ENCODE measurements at regions of chr5 and their contacts with region 1.

Region 1: DNA sequence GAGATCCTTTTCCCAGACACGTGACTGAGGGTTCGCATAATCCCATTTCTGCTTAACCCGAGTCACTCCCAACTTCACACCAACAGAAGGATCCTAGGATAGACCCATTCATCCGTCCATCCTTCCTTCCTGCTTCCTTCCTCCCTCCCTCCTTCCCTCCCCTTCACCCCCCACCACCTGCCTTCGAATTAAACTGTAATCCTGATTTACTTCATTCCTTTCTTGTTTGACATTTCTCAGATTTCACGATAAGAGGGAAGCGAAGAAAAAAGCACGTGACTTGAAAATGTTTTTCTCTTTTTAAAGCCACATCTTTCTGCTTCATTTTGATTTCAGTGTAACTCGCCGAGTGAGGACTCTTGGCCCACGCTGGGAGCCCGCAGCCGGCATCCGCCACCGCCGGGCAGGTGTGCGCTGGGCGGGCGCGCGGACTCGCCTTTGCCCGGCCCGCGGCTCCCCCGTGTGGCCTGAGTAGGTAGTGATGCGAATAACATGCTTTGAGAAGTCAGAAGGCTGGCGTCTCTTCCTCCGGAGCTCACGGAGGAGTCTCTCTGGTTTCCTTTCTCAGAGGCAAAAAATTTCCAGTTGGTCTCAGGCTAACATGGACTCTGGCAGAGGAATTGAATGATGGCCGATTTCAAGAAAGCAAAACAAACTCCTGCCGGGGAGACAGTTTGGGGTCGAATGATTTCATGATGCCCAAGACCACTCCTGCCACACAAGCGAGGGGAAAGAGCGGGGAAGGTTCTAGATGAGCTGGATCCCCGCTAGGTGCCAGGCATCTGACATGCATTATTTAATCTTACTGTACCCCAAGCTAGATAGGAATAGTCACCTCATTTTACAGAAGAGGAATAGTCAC is 117.7 kb downstream of the SLC12A2 start:
- DNase-seq: peak; percentile 87
- ATAC-seq: peak; percentile 66
- H3K4me3 ChIP-seq: peak overlapping the region; percentile 57
- H3K27ac ChIP-seq: peak overlapping the region; percentile 4; the same call in 1 of the 2 replicates
- H3K4me1 ChIP-seq: peaks cover 33% of the 10 kb centered on the region
- H3K27me3 ChIP-seq: no peaks in the 10 kb centered on the region
- CTCF ChIP-seq: peak; percentile 96

Region 2: GRCh38 chr5:127564002-127564769 is 637.1 kb before region 1 on chr5:
- CTCF ChIA-PET with region 1: no interaction called
- POLR2A ChIA-PET with region 1: no interaction called
- intact Hi-C with region 1: loop called (anchors 2 kb)
- DNase-seq: peak; percentile 77
- ATAC-seq: peak; percentile 89
- H3K4me3 ChIP-seq: no peak overlapping the region
- H3K27ac ChIP-seq: no peak overlapping the region
- H3K4me1 ChIP-seq: no peaks in the 10 kb centered on the region
- H3K27me3 ChIP-seq: peaks cover 28% of the 10 kb centered on the region; the same call in 1 of the 2 replicates
- CTCF ChIP-seq: peak; percentile 91

Region 3: GRCh38 chr5:127875235-127876021 is 325.9 kb before region 1 on chr5:
- CTCF ChIA-PET with region 1: interaction called, 8 read pairs
- POLR2A ChIA-PET with region 1: no interaction called
- intact Hi-C with region 1: loop called (anchors 1 kb)
- DNase-seq: peak; percentile 78
- ATAC-seq: peak; percentile 76
- H3K4me3 ChIP-seq: no peak overlapping the region
- H3K27ac ChIP-seq: 0 out of 2 replicates have a peak overlapping the region, but pooled peaks have one; percentile 9
- H3K4me1 ChIP-seq: peaks cover 17% of the 10 kb centered on the region
- H3K27me3 ChIP-seq: no peaks in the 10 kb centered on the region
- CTCF ChIP-seq: peak; percentile 73

Region 4: GRCh38 chr5:127934791-127935256 is 266.5 kb before region 1 on chr5:
- CTCF ChIA-PET with region 1: no interaction called
- POLR2A ChIA-PET with region 1: no interaction called
- intact Hi-C with region 1: loop called (anchors 2 kb)
- DNase-seq: peak; percentile 99
- ATAC-seq: peak; percentile 94
- H3K4me3 ChIP-seq: no peak overlapping the region
- H3K27ac ChIP-seq: peak overlapping the region; percentile 89
- H3K4me1 ChIP-seq: peaks cover 41% of the 10 kb centered on the region
- H3K27me3 ChIP-seq: no peaks in the 10 kb centered on the region
- CTCF ChIP-seq: peak; percentile 60

Region 5: GRCh38 chr5:128038643-128039042 is 162.7 kb before region 1 on chr5:
- CTCF ChIA-PET with region 1: no interaction called
- POLR2A ChIA-PET with region 1: no interaction called
- intact Hi-C with region 1: loop called (anchors 1 kb)
- DNase-seq: peak; percentile 79
- ATAC-seq: peak; percentile 80
- H3K4me3 ChIP-seq: no peak overlapping the region
- H3K27ac ChIP-seq: peak overlapping the region; percentile 79
- H3K4me1 ChIP-seq: peaks cover 27% of the 10 kb centered on the region
- H3K27me3 ChIP-seq: no peaks in the 10 kb centered on the region
- CTCF ChIP-seq: no peak